ENCODE measurements at regions of chr9 and their contacts with region 1.

Region 1: DNA sequence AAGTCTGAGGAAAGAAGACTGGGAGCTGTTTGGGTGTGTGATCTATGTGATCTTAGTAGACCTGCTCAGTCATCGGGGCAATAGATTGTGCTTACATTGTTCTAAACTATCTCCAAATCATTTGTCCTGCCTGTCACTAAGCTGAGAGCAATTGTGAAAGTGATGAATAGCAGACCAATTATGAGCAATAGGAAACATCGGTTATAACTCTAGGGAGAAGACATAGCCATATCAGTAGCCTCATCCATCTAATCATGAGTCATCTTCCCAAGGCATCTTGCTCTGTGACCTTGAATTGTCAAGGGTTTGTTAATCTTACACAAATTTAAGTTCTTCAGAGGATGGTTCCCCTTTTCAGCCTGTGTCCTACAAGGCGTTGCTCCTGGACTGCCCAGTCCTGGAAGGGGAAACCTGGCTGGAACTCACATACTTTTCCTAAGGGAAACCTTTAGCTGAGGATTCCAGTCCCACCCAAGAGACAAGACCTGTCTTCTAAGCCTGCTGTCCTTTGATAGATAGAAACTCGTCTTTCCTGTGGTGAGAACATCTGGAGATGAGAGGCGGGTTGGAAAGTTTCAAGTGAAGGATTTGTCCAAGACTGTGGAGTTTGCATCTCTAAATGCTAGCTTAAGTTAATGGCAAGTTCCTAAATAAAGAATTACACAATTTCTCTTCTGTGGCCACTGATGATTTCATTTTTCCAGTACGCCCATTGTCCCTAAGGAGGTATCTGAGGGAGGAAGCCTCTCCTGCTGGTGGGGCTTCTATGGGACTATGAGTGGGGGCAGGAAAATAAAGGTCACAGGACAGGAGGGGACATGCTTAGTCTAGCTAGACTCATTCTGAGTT is 53.9 kb upstream of the TRIM32 start:
- DNase-seq: no peak
- H3K4me3 Mint-ChIP-seq: no peak overlapping the region
- H3K27ac Mint-ChIP-seq: no peak overlapping the region
- H3K4me1 Mint-ChIP-seq: no peaks in the 10 kb centered on the region
- H3K27me3 Mint-ChIP-seq: no peaks in the 10 kb centered on the region
- CTCF ChIP-seq: no peak

Region 2: DNA sequence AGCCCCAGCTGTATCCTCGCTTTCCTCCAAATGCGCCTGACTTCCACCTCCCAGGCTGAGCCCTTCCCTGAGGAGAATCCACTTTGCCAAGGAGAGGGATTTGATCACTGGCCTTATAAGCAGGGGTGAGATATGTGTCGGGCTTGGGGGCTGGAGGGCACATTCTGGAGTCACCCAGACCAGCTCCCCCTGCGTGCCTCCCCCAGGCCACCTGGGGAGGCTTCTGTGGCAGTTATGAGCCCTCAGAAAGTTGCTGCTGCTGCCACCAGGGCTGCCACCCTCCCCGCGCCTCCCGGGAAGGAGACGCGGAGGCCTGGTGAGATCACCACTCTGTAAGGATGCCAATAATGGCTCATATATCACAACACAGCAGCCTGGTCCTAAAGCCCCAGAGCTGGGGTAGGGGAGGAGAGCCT is 268.1 kb before region 1 on chr9:
- CTCF ChIA-PET with region 1: no interaction called
- intact Hi-C with region 1: no loop called
- DNase-seq: no peak
- H3K4me3 Mint-ChIP-seq: no peak overlapping the region
- H3K27ac Mint-ChIP-seq: no peak overlapping the region
- H3K4me1 Mint-ChIP-seq: no peaks in the 10 kb centered on the region
- H3K27me3 Mint-ChIP-seq: no peaks in the 10 kb centered on the region
- CTCF ChIP-seq: no peak

Region 3: GRCh38 chr9:116661037-116661954 is 28.1 kb after region 1 on chr9:
- CTCF ChIA-PET with region 1: no interaction called
- intact Hi-C with region 1: loop called (anchors 1 kb)
- DNase-seq: peak; percentile 18
- H3K4me3 Mint-ChIP-seq: no peak overlapping the region
- H3K27ac Mint-ChIP-seq: no peak overlapping the region
- H3K4me1 Mint-ChIP-seq: no peaks in the 10 kb centered on the region
- H3K27me3 Mint-ChIP-seq: no peaks in the 10 kb centered on the region
- CTCF ChIP-seq: no peak

Region 4: GRCh38 chr9:116998305-116998704 is 365.1 kb after region 1 on chr9:
- CTCF ChIA-PET with region 1: no interaction called
- intact Hi-C with region 1: no loop called
- DNase-seq: no peak
- H3K4me3 Mint-ChIP-seq: no peak overlapping the region
- H3K27ac Mint-ChIP-seq: no peak overlapping the region
- H3K4me1 Mint-ChIP-seq: no peaks in the 10 kb centered on the region
- H3K27me3 Mint-ChIP-seq: no peaks in the 10 kb centered on the region
- CTCF ChIP-seq: no peak